ENCODE measurements at regions of chr4 and their contacts with region 1.

Region 1: DNA sequence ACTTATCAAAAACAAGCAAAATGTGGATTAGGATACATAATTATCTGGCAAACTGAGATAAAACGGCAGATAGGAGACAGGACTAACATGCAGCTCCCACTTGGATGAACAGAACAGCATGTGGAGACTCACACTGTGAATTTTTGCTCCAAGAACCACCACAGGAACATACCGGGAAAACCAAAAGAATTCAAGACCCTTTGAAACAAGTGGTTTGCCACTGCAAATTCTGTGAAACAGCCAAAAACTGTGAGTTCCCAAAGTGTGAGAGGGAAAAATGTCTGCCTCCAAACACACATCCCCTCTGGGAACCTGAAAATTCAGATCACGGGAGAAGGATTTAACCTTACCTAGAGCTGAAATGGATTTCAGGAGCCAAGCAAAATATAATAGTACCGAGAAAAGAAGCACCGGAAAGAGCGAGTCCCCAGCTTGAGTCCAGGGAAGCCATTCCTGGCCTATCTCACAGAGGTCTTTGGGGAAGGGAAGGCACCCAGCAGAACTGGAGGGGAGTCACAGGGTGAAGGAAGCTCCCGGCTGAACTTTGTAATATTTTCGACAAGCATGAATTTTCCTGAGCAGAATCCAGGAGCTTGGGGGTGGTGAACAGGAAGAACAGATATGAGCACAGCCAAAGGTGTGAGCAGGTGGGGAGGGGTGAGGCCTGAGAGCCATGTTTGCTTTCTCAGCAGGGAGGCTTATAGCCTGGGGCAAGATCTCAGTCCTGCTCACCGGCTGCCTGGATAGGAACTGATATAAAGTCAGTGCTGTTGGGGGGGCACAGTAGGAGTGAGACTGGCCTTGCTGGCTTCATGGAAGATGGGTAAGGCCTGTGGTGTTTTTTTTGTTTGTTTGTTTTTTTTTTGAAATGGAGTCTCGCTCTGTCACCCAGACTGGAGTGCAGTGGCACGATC is 23.9 kb downstream of the MANBA start:
- DNase-seq: peak; percentile 78 to 86
- H3K4me3 ChIP-seq: peak overlapping the region; percentile 45; the same call in 1 of the 2 replicates
- H3K27ac ChIP-seq: peak overlapping the region; percentile 77
- H3K4me1 ChIP-seq: peaks cover 27% of the 10 kb centered on the region
- H3K27me3 ChIP-seq: no peaks in the 10 kb centered on the region
- CTCF ChIP-seq: no peak

Region 2: DNA sequence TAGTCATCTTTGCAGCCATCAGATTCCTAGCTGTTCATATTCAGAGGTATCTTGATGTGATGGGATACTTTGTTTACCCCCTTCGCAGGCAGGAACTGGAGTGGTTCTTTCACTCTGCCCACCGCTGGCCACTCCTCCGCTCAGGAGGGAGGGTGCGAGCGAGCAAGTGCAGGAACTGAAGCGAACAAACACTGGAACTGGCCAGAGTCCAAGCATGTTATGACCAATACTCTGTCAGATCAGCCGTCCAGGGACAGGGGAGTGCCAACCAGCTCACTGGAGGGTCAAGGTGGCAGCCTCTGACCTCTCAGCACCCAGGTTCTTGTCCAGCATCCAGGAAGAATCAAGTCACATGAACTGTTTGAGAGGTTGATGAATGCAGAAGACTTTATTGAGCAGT is 41.8 kb after region 1 on chr4:
- CTCF ChIA-PET with region 1: no interaction called
- POLR2A ChIA-PET with region 1: no interaction called
- intact Hi-C with region 1: no loop called
- DNase-seq: no peak
- H3K4me3 ChIP-seq: no peak overlapping the region
- H3K27ac ChIP-seq: no peak overlapping the region
- H3K4me1 ChIP-seq: peaks cover 6% of the 10 kb centered on the region
- H3K27me3 ChIP-seq: no peaks in the 10 kb centered on the region
- CTCF ChIP-seq: no peak

Region 3: GRCh38 chr4:102826890-102827673 is 90.2 kb after region 1 on chr4 and contains the start of gene UBE2D3:
- CTCF ChIA-PET with region 1: no interaction called
- POLR2A ChIA-PET with region 1: interaction called, 12 read pairs
- intact Hi-C with region 1: no loop called
- DNase-seq: peak; percentile 75 to 85
- H3K4me3 ChIP-seq: peak within 1 kb of the TSS; percentile 95
- H3K27ac ChIP-seq: peak within 1 kb of the TSS; percentile 99
- H3K4me1 ChIP-seq: peaks cover 38% of the 10 kb centered on the region
- H3K27me3 ChIP-seq: no peaks in the 10 kb centered on the region
- CTCF ChIP-seq: no peak
- total RNA-seq, gene UBE2D3: 154 and 183 TPM in 2 replicates

Measured in PC-9 (cell line).